ENCODE measurements at regions of chr1 and their contacts with region 1.

Region 1: GRCh38 chr1:115068826-115069572 is 20.3 kb downstream of the TSPAN2 start:
- DNase-seq: no peak
- H3K4me3 ChIP-seq: no peak overlapping the region
- H3K4me3 Mint-ChIP-seq: peak overlapping the region; percentile 71
- H3K27ac Mint-ChIP-seq: peak overlapping the region; percentile 96
- H3K4me1 ChIP-seq: peaks cover 19% of the 10 kb centered on the region
- H3K4me1 Mint-ChIP-seq: peaks cover 21% of the 10 kb centered on the region
- H3K27me3 ChIP-seq: no peaks in the 10 kb centered on the region
- H3K27me3 Mint-ChIP-seq: no peaks in the 10 kb centered on the region
- CTCF ChIP-seq: no peak

Region 2: DNA sequence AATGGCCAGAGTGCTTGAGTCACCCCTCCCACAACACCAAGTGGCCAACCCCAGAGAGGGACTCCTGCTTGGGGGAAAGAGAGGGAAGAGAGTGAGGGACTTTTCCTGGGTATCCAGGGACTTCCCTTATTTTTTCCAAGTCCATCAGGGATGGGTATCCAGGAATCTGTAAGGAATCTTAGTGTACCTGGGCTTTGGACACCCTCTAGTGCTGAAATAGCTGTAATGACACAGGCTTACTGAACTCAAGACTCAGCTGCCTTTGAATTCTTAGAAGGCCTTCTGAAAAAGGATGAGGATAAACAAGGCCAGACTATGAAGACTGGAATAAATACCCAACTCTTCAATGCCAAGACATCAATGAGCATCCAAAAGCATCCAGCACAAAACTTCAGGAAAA is 27.3 kb before region 1 on chr1:
- CTCF ChIA-PET with region 1: no interaction called
- POLR2A ChIA-PET with region 1: no interaction called
- intact Hi-C with region 1: loop called (anchors 1 kb)
- DNase-seq: peak in 1 of 2 experiments; percentile 37
- H3K4me3 ChIP-seq: no peak overlapping the region
- H3K4me3 Mint-ChIP-seq: no peak overlapping the region
- H3K27ac Mint-ChIP-seq: no peak overlapping the region
- H3K4me1 ChIP-seq: peaks cover 21% of the 10 kb centered on the region
- H3K4me1 Mint-ChIP-seq: no peaks in the 10 kb centered on the region
- H3K27me3 ChIP-seq: no peaks in the 10 kb centered on the region
- H3K27me3 Mint-ChIP-seq: no peaks in the 10 kb centered on the region
- CTCF ChIP-seq: peak; percentile 48 to 54

Region 3: GRCh38 chr1:115052454-115053083 is 16.4 kb before region 1 on chr1:
- CTCF ChIA-PET with region 1: no interaction called
- POLR2A ChIA-PET with region 1: no interaction called
- intact Hi-C with region 1: loop called (anchors 1 kb)
- DNase-seq: peak; percentile 58 to 59
- H3K4me3 ChIP-seq: no peak overlapping the region
- H3K4me3 Mint-ChIP-seq: no peak overlapping the region
- H3K27ac Mint-ChIP-seq: no peak overlapping the region
- H3K4me1 ChIP-seq: peaks cover 16% of the 10 kb centered on the region
- H3K4me1 Mint-ChIP-seq: no peaks in the 10 kb centered on the region
- H3K27me3 ChIP-seq: no peaks in the 10 kb centered on the region
- H3K27me3 Mint-ChIP-seq: no peaks in the 10 kb centered on the region
- CTCF ChIP-seq: peak; percentile 49 to 50

Region 4: DNA sequence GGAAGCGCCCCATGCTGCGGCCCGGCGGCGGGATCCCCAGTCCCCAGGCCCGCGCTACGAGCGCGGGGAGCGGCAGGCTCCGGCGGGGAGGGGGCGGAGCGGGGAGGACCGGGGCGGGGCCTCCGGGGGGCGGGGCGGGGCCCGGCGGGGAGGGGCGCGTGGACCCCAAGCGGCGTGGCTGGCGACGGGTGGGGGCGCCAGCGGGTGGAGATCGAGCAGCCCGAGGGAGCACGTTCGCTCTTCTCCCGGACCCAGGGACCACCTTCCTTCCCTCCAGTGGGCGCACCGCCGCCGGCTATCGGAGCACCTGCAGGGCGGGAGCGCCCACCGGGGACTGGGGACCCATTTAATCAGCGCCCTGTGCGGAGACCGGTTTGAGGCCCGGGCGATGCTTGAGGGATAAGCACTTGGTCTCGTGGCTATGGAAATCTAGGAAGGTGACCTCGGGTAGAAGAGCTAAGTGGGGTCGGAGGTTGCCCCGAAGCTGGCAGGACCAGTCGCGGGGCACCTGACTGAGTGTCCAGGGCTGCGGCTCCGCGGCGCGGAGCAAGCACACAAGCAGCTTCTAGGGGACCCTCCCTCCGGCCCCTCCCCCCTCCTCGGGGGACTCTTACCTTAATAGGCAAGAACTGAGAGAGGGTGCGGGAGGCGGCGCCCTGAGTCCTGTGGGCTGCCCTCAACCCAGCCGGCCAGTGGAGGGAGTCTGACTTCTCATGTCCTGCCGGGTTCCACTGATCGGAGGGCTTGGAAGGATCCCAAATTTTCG is 20.6 kb after region 1 on chr1 and contains the start of gene TSPAN2:
- CTCF ChIA-PET with region 1: no interaction called
- POLR2A ChIA-PET with region 1: no interaction called
- intact Hi-C with region 1: loop called (anchors 1 kb)
- DNase-seq: peak; percentile 74 to 75
- H3K4me3 ChIP-seq: peak within 1 kb of the TSS; percentile 55
- H3K4me3 Mint-ChIP-seq: peak within 1 kb of the TSS; percentile 74
- H3K27ac Mint-ChIP-seq: no peak within 1 kb of the TSS
- H3K4me1 ChIP-seq: 0 out of 2 replicates have a peak, but pooled peaks cover 3% of the 10 kb centered on the region
- H3K4me1 Mint-ChIP-seq: peaks cover 6% of the 10 kb centered on the region
- H3K27me3 ChIP-seq: no peaks in the 10 kb centered on the region
- H3K27me3 Mint-ChIP-seq: no peaks in the 10 kb centered on the region
- CTCF ChIP-seq: peak in 1 of 2 experiments; percentile 23
- total RNA-seq, gene TSPAN2: 6.8 and 6.9 TPM in 2 replicates

Region 5: GRCh38 chr1:115227346-115228135 is 158.5 kb after region 1 on chr1:
- CTCF ChIA-PET with region 1: no interaction called
- POLR2A ChIA-PET with region 1: no interaction called
- intact Hi-C with region 1: no loop called
- DNase-seq: no peak
- H3K4me3 ChIP-seq: no peak overlapping the region
- H3K4me3 Mint-ChIP-seq: no peak overlapping the region
- H3K27ac Mint-ChIP-seq: no peak overlapping the region
- H3K4me1 ChIP-seq: no peaks in the 10 kb centered on the region
- H3K4me1 Mint-ChIP-seq: no peaks in the 10 kb centered on the region
- H3K27me3 ChIP-seq: no peaks in the 10 kb centered on the region
- H3K27me3 Mint-ChIP-seq: no peaks in the 10 kb centered on the region
- CTCF ChIP-seq: no peak